Activated CD4-positive, alpha-beta T cell treated with anti-CD3 and anti-CD28 coated beads for 36 hours (primary cell): ENCODE measurements at regions of chr6 and their contacts with region 1.

Region 1: DNA sequence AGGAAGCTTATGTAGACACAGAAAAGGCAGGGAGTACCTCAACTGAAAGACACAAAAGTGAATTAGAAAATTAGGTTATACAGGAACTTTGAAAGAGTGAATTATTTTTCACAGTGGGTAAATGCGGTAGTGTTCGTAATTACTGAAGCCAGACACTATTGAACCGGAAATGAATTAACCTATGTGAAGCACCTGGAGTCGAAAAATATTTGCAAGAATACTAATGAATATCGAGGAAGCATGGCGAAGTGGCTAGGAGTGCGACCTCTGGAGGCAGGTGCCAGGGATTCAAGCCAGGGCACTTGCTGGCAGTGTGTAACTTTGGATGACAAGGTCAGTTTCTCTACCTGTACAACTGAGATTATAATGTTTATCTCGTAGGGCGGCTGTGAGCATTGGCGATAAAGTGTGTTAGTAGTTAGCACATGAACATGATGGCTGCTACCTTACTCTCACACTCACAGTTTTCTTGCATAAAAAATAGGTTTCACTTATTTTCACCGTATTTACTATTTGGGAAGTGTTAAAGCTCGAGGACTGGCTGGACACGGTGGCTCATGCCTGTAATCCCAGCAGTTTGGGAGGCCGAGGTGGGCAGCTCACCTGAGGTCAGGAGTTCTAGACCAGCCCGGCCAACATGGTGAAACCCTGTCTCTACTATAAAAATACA is 567 bp upstream of the SLC18B1 start:
- DNase-seq: peak; percentile 84
- ATAC-seq: peak; percentile 86
- H3K4me3 Mint-ChIP-seq: no peak overlapping the region
- H3K27ac Mint-ChIP-seq: no peak overlapping the region
- H3K4me1 Mint-ChIP-seq: peaks cover 21% of the 10 kb centered on the region
- H3K27me3 Mint-ChIP-seq: no peaks in the 10 kb centered on the region

Region 2: GRCh38 chr6:132512638-132513632 is 286.1 kb before region 1 on chr6 and contains the start of gene STX7:
- CTCF ChIA-PET with region 1: interaction called, 3 read pairs
- POLR2A ChIA-PET with region 1: interaction called, 3 read pairs
- intact Hi-C with region 1: loop called in 1 of 2 experiments (anchors 5 kb)
- DNase-seq: peak; percentile 90
- ATAC-seq: peak; percentile 97
- H3K4me3 Mint-ChIP-seq: peak within 1 kb of the TSS; percentile 88
- H3K27ac Mint-ChIP-seq: peak within 1 kb of the TSS; percentile 85
- H3K4me1 Mint-ChIP-seq: peaks cover 30% of the 10 kb centered on the region
- H3K27me3 Mint-ChIP-seq: no peaks in the 10 kb centered on the region
- total RNA-seq, gene STX7: 13.3 to 20.3 TPM

Region 3: GRCh38 chr6:132669690-132670291 is 129.2 kb before region 1 on chr6:
- CTCF ChIA-PET with region 1: interaction called, 21 read pairs
- POLR2A ChIA-PET with region 1: no interaction called
- intact Hi-C with region 1: loop called (anchors 1 kb)
- DNase-seq: no peak
- ATAC-seq: peak; percentile 64
- H3K4me3 Mint-ChIP-seq: no peak overlapping the region
- H3K27ac Mint-ChIP-seq: no peak overlapping the region
- H3K4me1 Mint-ChIP-seq: peaks cover 3% of the 10 kb centered on the region
- H3K27me3 Mint-ChIP-seq: peaks cover 3% of the 10 kb centered on the region

Region 4: GRCh38 chr6:132780770-132781371 is 18.1 kb before region 1 on chr6:
- CTCF ChIA-PET with region 1: interaction called, 11 read pairs
- POLR2A ChIA-PET with region 1: no interaction called
- intact Hi-C with region 1: no loop called
- DNase-seq: peak; percentile 14
- ATAC-seq: peak; percentile 53
- H3K4me3 Mint-ChIP-seq: no peak overlapping the region
- H3K27ac Mint-ChIP-seq: no peak overlapping the region
- H3K4me1 Mint-ChIP-seq: no peaks in the 10 kb centered on the region
- H3K27me3 Mint-ChIP-seq: no peaks in the 10 kb centered on the region

Region 5: DNA sequence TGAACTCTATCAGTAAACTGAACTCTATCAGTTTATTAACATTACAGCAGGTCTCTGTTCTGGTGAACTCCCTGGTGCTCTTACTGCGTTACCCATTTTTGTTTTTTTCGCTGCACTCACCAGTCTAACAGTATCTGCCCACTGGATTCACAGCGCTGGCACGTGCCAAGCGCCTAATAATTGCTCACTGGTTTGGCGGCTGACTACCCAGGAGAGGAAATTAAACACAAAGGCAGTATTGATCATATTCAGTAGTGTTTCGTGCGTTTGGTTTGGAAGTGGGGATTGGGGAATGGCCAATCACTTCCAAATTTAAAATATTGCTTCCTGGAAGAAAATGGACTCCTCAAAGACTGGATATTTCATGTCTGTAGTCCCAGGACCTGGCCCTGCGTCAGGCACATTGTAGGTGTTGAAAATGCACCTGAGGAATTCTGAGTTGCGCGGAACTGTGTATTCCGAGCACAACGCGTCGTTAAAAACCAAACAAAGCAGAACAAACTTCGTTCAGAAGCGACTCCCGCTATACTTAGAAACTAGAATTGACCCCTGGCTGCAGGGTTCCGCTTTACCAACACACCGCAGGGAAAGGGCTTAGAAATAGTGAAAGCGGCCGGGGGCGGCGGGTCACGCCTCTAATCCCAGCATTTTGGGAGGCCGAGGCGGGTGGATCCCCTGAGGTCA is 14.3 kb after region 1 on chr6:
- CTCF ChIA-PET with region 1: interaction called, 50 read pairs
- POLR2A ChIA-PET with region 1: interaction called, 15 read pairs
- intact Hi-C with region 1: loop called (anchors 1 kb)
- DNase-seq: peak; percentile 64
- ATAC-seq: peak; percentile 23
- H3K4me3 Mint-ChIP-seq: peak overlapping the region; percentile 89
- H3K27ac Mint-ChIP-seq: peak overlapping the region; percentile 99
- H3K4me1 Mint-ChIP-seq: peaks cover 30% of the 10 kb centered on the region
- H3K27me3 Mint-ChIP-seq: no peaks in the 10 kb centered on the region

Region 6: DNA sequence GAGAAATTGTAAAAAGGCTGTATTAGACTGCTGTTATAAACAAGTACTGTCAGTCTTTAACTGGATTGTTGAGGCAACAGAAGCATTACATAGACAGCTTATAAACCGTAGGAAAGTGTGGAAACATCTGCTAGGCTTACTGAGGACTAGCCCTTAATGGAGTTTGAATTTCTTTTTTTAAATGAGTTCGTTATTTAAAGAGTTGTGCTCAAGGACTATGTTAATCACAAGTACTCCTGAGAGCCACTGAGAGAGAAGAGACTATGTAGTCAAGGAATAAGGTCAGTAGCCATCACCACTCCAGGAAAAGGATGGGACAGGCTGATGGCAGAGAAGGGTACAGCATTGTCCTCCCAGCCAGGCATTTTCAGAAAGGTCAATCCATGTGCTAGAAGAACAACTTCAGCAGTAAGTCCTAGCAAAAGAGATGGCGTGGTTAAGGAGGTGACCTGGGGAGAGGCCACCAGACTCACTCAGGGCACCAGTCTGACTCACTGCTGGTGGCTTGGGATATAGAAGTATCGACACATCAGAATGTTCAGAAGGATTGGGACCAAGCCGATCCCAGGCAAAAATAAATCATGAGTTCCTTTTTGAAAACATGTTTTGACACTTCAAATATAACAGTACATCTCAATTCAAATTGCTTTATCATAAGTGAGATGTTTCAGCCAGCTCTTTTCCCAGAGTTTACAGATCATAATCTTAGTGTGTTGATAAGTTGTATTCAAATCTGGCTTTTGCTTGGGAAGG is 21.8 kb after region 1 on chr6:
- CTCF ChIA-PET with region 1: interaction called, 6 read pairs
- POLR2A ChIA-PET with region 1: interaction called, 3 read pairs
- intact Hi-C with region 1: loop called in 1 of 2 experiments (anchors 1 kb)
- DNase-seq: no peak
- ATAC-seq: peak; percentile 10
- H3K4me3 Mint-ChIP-seq: no peak overlapping the region
- H3K27ac Mint-ChIP-seq: peak overlapping the region; percentile 61
- H3K4me1 Mint-ChIP-seq: peaks cover 48% of the 10 kb centered on the region
- H3K27me3 Mint-ChIP-seq: no peaks in the 10 kb centered on the region

Region 7: DNA sequence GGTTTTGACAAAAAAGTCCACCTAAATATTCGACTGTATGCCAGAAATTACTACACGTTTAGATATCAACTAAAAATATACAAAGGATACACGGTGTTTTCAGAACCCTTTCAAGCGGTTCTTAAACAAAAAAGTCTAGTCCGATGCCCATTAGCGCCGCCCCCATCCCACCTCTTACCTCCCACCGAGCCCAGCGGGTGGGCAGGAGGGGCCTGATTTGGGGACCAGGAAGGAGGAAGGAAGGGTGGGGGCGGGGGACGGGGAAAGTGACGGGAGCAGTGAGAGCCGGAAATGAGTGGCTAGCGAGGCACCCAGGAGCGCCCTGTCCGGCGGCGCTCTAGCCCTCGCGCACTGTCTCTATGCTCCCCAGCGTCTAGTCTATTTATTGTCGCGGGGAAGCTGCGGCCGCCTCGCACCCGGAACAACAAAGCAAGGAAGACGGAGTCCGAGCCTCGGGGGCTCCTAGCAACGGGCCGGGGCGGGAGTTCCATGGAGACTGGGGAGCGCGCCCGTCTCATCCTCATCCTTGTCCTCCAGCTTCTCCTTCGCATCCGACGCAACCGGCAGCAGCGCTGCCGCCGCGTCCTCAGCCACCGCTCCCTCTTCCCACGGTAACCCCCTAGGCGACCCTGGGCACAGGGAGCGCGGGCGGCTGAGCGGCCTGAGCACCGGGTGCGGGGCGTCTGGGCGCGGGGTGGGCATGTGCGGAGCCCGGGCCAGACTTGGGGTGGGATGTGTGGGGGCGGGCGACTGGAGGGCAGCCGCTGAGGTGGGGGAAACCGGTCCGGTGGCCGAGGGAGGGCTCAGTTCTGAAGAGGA is 1154.0 kb after region 1 on chr6 and contains the start of gene TBPL1:
- CTCF ChIA-PET with region 1: interaction called, 3 read pairs
- POLR2A ChIA-PET with region 1: no interaction called
- intact Hi-C with region 1: loop called in 1 of 2 experiments (anchors 5 kb)
- DNase-seq: peak; percentile 92
- ATAC-seq: peak; percentile 90
- H3K4me3 Mint-ChIP-seq: peak within 1 kb of the TSS; percentile 98
- H3K27ac Mint-ChIP-seq: peak within 1 kb of the TSS; percentile 93
- H3K4me1 Mint-ChIP-seq: peaks cover 38% of the 10 kb centered on the region
- H3K27me3 Mint-ChIP-seq: no peaks in the 10 kb centered on the region
- total RNA-seq, gene TBPL1: 32.2 to 33.9 TPM